H1 (cell line): ENCODE measurements at regions of chr7 and their contacts with region 1.

Region 1: GRCh38 chr7:45580053-45580872 is 6.1 kb downstream of the ADCY1 start:
- DNase-seq: peak in 1 of 2 experiments; percentile 69
- H3K4me3 ChIP-seq: no peak overlapping the region
- H3K27ac ChIP-seq: no peak overlapping the region
- H3K4me1 ChIP-seq: peaks cover 13 to 58% (median 42%) of the 10 kb centered on the region in 4 experiments
- H3K27me3 ChIP-seq: peaks cover 4 to 14% (median 13%) of the 10 kb centered on the region in 4 experiments
- CTCF ChIP-seq: peak in 2 of 3 experiments; percentile 70 to 76; a peak in 3 of 4 replicates
- EP300 ChIP-seq: no peak
- POLR2A ChIP-seq: no peak
- RAD21 ChIP-seq: peak; percentile 66 to 67

Region 2: DNA sequence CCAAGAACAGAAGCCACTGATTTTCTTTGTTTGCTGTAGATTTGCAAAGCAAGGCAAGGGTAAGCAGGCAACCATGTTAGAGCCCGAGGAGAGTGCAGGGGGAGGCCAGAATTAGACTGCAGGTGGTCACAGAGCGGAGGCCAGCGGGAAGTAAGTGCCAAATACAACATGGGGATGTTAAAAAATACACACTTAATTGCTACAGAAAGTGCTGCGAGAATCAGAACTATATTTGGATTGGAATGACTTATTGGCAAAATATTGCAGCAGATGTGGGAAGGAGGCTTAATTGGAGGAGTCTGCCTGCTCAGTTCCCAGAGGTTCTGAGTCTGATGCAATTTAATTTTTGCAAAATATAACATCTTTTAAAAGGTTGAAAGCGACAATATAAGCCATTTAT is 55.8 kb before region 1 on chr7:
- CTCF ChIA-PET with region 1: no interaction called
- POLR2A ChIA-PET with region 1: no interaction called
- DNase-seq: no peak
- H3K4me3 ChIP-seq: no peak overlapping the region
- H3K27ac ChIP-seq: no peak overlapping the region
- H3K4me1 ChIP-seq: no peaks in the 10 kb centered on the region
- H3K27me3 ChIP-seq: no peaks in the 10 kb centered on the region
- CTCF ChIP-seq: no peak
- EP300 ChIP-seq: no peak
- POLR2A ChIP-seq: no peak
- RAD21 ChIP-seq: no peak

Region 3: DNA sequence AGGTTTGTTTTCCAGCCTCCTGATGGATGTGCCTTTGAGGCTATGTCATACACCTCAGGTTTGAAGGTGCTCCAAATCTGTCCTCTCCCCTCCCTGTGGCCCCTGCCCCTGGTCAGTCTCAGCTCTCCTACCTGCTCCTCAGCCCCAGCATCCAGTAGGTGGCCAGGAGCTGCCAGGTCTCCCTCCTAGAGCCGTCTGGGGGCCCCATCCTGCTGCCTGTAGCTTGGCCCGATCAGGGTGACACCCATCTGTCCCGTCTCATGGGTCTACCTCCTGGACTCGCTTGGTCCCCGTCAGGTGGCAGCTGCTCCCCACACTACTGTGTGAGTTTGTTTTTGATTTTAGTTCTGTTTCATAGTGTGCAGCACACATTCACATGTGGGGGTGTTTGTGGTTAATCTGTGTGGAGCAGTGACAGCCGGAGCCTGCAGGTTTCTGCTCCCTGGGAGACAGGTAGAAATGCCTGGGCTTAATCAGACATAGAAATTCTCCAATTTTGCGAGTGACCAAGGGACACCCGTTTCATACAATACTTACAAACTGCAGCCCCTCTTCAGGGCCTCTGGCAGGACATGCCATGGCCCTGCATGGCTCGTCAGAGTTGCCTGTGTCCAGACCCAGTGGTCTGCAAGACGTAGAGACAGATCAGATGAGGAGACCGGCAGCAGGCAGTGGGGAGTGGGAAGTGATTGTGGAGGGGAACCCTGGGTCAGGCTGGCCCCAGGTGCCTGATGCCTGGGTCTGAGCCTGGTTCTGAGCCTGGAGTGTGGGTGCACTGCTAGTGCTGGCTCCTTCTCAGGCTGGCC is 11.0 kb after region 1 on chr7:
- CTCF ChIA-PET with region 1: interaction called, 22 read pairs
- POLR2A ChIA-PET with region 1: interaction called, 5 read pairs
- DNase-seq: peak in 1 of 2 experiments; percentile 43
- H3K4me3 ChIP-seq: no peak overlapping the region
- H3K27ac ChIP-seq: no peak overlapping the region
- H3K4me1 ChIP-seq: peaks cover 0 to 2% (median 0%) of the 10 kb centered on the region in 4 experiments; a peak in 2 of 7 replicates
- H3K27me3 ChIP-seq: no peaks in the 10 kb centered on the region
- CTCF ChIP-seq: no peak
- EP300 ChIP-seq: no peak
- POLR2A ChIP-seq: no peak
- RAD21 ChIP-seq: no peak

Region 4: DNA sequence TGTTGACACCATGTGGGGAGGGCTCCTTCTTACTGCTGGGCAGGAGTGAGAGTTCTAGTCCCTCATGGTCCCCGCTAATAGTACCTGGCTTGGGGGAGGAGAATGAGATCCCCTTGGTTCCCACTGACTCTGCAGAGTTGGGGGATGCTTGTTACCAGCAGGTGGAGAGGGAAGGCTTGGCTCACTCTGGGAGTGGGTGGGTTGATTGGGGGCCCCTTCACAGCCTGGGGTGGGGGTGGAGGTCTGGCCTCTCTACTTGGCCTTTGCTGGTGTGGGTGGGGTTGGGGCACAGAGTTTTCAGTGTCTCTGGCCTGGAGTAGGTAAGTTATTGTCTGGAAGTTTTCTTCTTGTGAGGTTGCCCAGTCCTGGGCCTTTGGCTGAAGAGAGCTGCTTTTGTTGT is 25.8 kb after region 1 on chr7:
- CTCF ChIA-PET with region 1: no interaction called
- POLR2A ChIA-PET with region 1: no interaction called
- DNase-seq: peak in 1 of 2 experiments; percentile 16
- H3K4me3 ChIP-seq: no peak overlapping the region
- H3K27ac ChIP-seq: no peak overlapping the region
- H3K4me1 ChIP-seq: no peaks in the 10 kb centered on the region
- H3K27me3 ChIP-seq: no peaks in the 10 kb centered on the region
- CTCF ChIP-seq: no peak
- EP300 ChIP-seq: no peak
- POLR2A ChIP-seq: no peak
- RAD21 ChIP-seq: no peak

Region 5: DNA sequence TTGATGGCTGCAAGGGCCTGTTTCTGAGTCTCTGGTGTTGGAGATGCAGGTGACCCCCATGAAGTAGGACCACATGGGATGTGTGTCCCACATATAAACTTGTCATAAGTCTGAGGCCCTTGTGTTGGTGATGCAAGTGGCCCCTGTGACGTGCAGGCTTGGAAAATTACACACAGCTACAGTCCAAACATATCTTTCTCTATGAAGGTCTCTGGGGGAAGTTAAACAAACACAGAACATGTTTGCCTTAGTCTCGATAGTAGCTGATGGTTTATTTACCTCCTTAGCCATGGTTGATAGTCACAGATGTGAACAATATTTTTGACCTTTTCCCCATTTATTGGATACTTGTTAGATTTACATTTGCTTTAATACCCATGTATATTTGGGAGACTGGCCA is 58.7 kb after region 1 on chr7:
- CTCF ChIA-PET with region 1: no interaction called
- POLR2A ChIA-PET with region 1: no interaction called
- DNase-seq: no peak
- H3K4me3 ChIP-seq: no peak overlapping the region
- H3K27ac ChIP-seq: no peak overlapping the region
- H3K4me1 ChIP-seq: peaks cover 0 to 1% (median 0%) of the 10 kb centered on the region in 4 experiments; a peak in 2 of 7 replicates
- H3K27me3 ChIP-seq: no peaks in the 10 kb centered on the region
- CTCF ChIP-seq: no peak
- EP300 ChIP-seq: no peak
- POLR2A ChIP-seq: no peak
- RAD21 ChIP-seq: no peak

Region 6: GRCh38 chr7:45663167-45663921 is 83.1 kb after region 1 on chr7:
- CTCF ChIA-PET with region 1: interaction called, 17 read pairs
- POLR2A ChIA-PET with region 1: no interaction called
- DNase-seq: peak; percentile 9 to 87
- H3K4me3 ChIP-seq: no peak overlapping the region
- H3K27ac ChIP-seq: no peak overlapping the region
- H3K4me1 ChIP-seq: no peaks in the 10 kb centered on the region; a peak in 1 of 7 replicates
- H3K27me3 ChIP-seq: no peaks in the 10 kb centered on the region
- CTCF ChIP-seq: peak; percentile 77 to 95 (median 86)
- EP300 ChIP-seq: no peak
- POLR2A ChIP-seq: no peak
- RAD21 ChIP-seq: peak; percentile 80 to 82

Region 7: DNA sequence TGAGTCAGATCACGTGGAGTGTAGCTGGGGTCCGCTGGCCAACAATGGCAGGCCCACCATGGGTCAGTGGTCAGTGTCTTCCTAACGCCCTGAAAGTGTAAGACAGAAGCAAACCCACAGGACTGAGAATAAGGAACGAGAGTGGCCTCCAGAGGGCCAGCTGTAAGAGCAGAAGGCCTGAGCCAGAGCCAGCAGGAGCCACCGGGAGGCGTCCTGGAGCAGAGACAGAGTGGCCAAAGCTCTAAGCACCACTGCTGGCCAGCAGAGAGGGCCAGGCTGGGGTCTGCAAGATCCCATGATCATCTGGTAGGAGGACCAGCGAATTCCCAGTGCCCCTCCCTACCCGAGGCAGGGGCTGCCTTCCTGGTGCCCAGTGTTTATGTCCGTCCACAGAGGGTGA is 283.5 kb after region 1 on chr7:
- CTCF ChIA-PET with region 1: no interaction called
- POLR2A ChIA-PET with region 1: no interaction called
- DNase-seq: peak in 1 of 2 experiments; percentile 69
- H3K4me3 ChIP-seq: no peak overlapping the region
- H3K27ac ChIP-seq: no peak overlapping the region
- H3K4me1 ChIP-seq: no peaks in the 10 kb centered on the region
- H3K27me3 ChIP-seq: no peaks in the 10 kb centered on the region
- CTCF ChIP-seq: peak; percentile 82 to 99 (median 86)
- EP300 ChIP-seq: no peak
- POLR2A ChIP-seq: no peak
- RAD21 ChIP-seq: peak; percentile 47 to 61